BJ (cell line): ENCODE measurements at regions of chr4 and their contacts with region 1.

Region 1: GRCh38 chr4:139493176-139493575 is 39.3 kb downstream of the RAB33B start:
- DNase-seq: no peak
- H3K4me3 ChIP-seq: no peak overlapping the region
- H3K27me3 ChIP-seq: no peaks in the 10 kb centered on the region
- CTCF ChIP-seq: no peak

Region 2: GRCh38 chr4:139144161-139144859 is 348.9 kb before region 1 on chr4:
- CTCF ChIA-PET with region 1: no interaction called
- POLR2A ChIA-PET with region 1: interaction called, 13 read pairs
- DNase-seq: no peak
- H3K4me3 ChIP-seq: no peak overlapping the region
- H3K27me3 ChIP-seq: no peaks in the 10 kb centered on the region
- CTCF ChIP-seq: no peak